ENCODE measurements at regions of chr1 and their contacts with region 1.

Region 1: DNA sequence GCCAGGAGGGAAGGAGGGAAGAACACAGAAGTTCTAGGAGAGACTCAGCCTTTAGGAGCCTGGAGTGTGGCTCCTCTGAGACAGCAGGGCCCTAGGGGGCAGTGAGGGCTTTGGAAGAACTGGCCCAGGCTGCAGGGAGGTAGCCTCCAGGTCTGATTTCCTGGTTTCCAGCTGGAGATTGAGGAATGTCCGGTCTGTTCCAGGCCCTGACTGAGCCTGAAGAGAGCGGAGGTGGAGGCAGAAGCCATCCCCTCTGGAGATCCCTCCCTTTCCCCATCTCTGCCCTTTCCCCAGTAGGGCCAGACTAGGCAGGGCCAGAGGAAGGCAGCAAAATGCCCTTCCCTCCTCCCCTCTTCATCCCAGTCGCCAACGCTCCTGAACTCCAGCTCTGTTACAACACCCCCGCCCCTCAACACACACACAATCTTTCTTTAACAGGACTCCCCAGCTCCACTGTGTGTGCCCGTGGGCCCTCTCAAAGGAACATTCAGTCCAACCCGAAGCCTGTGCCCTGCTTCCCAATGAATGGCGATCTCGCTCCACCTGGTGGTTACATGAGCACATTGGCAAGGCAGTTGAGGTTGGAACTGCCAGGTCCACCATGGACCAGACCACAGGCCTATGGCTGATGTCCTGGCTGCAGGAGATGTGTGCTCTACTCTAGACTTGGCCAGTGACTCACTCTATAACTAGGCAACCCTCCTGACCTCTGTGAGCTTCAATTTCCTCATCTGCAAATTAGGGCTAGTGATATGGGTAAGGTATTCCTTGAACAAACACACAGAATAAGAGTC is 32.0 kb downstream of the MAP7D1 start:
- DNase-seq: peak; percentile 91
- ATAC-seq: peak; percentile 94

Region 2: DNA sequence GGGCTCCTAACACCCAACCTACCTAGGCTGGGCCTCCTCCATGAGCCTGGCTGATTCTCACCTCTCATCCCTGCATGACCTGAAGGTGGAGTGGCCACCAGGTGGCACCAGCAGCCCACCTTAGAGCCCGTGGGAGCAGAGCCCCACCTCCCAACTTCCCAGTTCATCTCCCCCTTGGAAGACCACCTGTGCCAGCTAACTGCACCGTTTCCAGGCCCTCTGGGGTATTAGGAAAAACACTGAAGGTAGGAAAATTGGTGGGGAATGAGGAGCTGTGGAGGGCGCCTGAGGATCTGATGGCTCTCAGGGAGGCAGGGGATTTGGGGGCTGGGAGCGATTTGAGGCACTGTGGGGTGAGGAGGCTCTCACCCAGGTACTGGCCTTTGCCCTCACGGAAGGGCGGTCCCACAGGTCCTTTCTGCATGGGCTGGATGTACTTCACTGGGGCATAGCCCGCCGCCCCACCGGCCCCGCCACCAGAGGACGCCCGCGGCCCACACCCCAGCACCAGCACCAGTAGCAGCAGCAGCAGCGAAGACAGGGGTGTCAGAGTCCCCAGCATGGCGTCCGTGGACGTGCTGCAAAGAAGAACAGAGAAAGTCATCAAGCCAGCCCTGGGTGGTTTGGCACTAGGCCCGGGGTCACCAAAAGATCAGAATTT is 88.2 kb before region 1 on chr1:
- intact Hi-C with region 1: loop called (anchors 2 kb)
- DNase-seq: peak; percentile 88
- ATAC-seq: peak; percentile 79

Region 3: DNA sequence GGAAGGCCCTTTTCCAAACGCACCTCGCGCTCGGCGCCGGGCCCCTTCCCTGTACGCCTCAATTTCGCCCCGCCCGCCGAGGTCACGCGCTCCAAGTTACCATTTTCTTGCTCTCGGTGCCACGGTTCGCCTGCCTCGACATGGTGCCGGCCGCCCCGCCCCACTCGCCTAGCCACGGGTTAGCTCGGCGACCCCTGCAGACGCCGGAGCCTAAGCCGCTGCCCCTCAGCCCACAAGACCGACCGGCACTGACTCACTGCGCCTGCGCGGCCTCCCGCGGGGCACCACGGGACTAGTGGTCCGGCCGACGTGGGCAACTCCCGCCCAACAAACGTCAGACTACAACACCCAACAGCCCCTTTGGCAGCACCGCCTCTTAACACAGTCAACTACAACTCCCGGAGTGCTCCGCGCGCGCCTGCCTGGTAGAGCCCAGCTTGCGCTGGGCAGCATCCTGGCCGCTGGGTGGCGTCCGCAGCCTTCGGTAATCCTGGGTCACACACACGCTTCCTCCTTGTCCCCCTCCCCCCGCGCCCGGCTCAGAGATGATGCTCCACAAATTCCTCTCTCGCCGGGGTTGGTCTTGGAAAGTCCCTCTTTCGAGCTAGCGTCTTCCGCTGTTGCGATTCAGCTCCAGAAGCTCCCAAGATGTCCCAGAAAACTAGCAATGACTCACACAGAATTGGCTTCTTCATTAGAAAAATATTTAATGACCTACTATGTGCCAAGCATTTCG is 38.6 kb before region 1 on chr1 and contains the start of gene TRAPPC3:
- intact Hi-C with region 1: loop called (anchors 1 kb)
- DNase-seq: peak; percentile 100
- ATAC-seq: peak; percentile 94
- total RNA-seq, gene TRAPPC3: 53.9 TPM

Region 4: GRCh38 chr1:36160949-36161485 is 27.0 kb before region 1 on chr1:
- intact Hi-C with region 1: no loop called
- DNase-seq: peak; percentile 80
- ATAC-seq: peak; percentile 42